Body of pancreas (tissue), 4 donors: ENCODE measurements at regions of chr12 and their contacts with region 1.

Region 1: DNA sequence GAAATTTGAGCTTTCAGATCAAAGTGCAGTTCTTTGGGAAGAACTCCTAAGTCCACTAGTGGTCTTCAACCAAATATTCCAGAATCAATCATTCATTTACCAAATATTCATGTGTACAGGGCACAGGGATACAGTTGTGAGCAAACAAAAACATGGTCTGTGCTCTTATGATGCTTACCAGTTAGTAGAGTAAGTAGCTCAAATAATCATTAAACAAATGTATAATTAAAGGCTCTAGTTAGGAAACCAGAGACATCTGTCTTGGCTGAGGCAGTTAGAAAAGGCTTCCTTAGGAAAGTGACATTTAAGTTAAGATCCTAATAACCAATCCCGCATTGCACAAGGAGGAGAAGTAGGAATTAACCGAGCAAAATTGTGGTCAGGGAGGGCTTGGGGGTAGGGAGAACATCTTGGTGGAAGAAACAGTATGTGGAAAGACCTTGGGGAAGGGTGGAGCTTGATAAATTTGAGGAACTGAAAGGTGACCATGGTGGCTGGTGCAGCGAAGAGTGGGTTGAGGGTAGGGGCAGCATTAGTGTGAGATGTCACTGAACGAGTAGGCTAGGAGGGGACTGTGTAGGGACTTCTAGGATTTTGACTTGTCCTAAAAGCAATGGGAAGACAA is 40.0 kb downstream of the PEBP1 start:
- DNase-seq: peak in 1 of 4 donors; percentile 27
- ATAC-seq: no peak
- H3K4me3 ChIP-seq: no peak overlapping the region
- H3K27ac ChIP-seq: no peak overlapping the region
- H3K4me1 ChIP-seq: no peaks in the 10 kb centered on the region
- H3K27me3 ChIP-seq: no peaks in the 10 kb centered on the region
- CTCF ChIP-seq: no peak
- POLR2A ChIP-seq: no peak

Region 2: GRCh38 chr12:117890137-117890536 is 285.8 kb before region 1 on chr12:
- intact Hi-C with region 1: no loop called
- DNase-seq: no peak
- ATAC-seq: no peak
- H3K4me3 ChIP-seq: no peak overlapping the region
- H3K27ac ChIP-seq: no peak overlapping the region
- H3K4me1 ChIP-seq: no peaks in the 10 kb centered on the region
- H3K27me3 ChIP-seq: no peaks in the 10 kb centered on the region
- CTCF ChIP-seq: no peak
- POLR2A ChIP-seq: no peak

Region 3: GRCh38 chr12:118372541-118373495 is 196.9 kb after region 1 on chr12 and contains the start of gene TAOK3:
- intact Hi-C with region 1: loop called (anchors 10 kb)
- DNase-seq: peak; percentile 99
- ATAC-seq: peak; percentile 93
- H3K4me3 ChIP-seq: peak within 1 kb of the TSS; percentile 83 to 98
- H3K27ac ChIP-seq: peak within 1 kb of the TSS; percentile 63 to 94 (median 77)
- H3K4me1 ChIP-seq: peaks cover 38% of the 10 kb centered on the region
- H3K27me3 ChIP-seq: no peaks in the 10 kb centered on the region
- CTCF ChIP-seq: peak in 1 of 7 experiments; percentile 15
- POLR2A ChIP-seq: peak; percentile 75 to 97 (median 95)
- total RNA-seq, gene TAOK3: 15.6 to 29.3 TPM